Posterior cingulate gyrus (tissue), 11 donors: ENCODE measurements at regions of chr10 and their contacts with region 1.

Region 1: DNA sequence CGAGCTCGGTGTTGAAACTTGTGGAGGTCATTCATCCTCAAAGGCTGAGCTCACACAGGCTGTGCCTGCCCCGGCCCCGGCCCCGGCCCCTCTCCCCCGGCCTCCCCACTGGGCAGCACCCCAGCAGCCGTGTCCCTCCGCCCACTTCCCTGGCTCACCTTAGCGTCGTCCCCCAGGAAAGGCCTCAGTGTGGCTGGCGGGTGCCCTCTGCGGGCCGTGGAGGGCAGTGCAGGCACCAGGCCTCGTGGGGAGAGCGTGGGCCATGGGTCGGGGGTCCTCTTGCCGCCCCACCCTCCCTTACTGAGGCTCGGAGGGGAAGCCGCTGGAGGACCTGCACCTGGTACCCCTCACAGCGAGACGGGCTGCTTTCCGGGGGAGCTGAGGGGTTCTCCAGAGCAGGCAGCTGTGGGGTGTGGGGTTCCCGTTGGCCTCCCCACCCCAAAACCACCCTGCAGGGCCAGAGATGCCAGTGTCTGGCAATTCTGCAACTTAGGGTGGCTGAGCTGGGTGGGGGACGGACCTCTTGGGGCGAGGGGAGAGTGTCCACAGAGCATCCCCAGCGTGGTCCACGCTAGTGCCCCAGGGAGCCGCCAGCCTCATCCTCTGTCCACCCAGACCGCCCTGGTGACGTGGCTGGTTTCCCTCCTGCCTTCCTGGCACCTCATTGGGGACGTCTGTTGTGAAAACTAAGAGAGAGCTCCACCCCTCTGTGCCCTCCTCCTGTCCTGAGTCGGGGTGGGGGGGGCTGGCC is 44.2 kb upstream of the DPYSL4 start:
- DNase-seq: peak in 9 of 10 donors; percentile 48 to 95 (median 66)

Region 2: DNA sequence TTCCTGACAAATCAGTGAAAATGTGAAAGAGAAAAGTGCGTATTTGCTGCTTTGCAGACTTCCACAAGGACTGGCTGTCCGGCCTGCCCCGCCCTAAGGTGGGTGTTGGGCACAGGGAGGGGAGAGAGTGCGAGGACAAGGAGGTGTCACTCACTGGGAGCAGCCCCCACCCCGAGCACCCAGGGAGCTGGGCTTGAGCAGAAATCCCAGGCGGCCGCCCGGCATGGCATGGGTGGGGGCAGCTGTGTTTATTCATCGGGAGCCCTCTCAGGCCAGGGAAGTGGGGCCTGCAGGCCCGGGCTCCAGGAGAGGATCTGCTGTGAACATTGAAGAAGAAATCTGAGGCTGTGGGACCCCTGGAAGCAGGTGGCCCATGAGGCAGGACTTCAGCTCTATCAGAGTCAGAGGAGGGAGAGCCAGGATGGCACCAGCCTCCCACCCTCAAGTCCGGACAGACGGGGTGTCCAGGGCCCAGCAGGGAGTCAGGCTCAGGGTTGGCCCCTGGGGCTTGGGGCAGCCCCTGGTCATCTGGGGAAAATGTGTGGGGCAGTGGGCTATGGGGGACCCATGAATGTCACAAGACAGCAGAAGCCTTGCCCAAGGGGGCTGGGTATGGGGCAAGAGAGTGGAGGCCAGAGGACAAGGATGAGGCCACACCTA is 406.1 kb before region 1 on chr10:
- intact Hi-C with region 1: no loop called
- DNase-seq: peak in 2 of 10 donors; percentile 66 to 67

Region 3: DNA sequence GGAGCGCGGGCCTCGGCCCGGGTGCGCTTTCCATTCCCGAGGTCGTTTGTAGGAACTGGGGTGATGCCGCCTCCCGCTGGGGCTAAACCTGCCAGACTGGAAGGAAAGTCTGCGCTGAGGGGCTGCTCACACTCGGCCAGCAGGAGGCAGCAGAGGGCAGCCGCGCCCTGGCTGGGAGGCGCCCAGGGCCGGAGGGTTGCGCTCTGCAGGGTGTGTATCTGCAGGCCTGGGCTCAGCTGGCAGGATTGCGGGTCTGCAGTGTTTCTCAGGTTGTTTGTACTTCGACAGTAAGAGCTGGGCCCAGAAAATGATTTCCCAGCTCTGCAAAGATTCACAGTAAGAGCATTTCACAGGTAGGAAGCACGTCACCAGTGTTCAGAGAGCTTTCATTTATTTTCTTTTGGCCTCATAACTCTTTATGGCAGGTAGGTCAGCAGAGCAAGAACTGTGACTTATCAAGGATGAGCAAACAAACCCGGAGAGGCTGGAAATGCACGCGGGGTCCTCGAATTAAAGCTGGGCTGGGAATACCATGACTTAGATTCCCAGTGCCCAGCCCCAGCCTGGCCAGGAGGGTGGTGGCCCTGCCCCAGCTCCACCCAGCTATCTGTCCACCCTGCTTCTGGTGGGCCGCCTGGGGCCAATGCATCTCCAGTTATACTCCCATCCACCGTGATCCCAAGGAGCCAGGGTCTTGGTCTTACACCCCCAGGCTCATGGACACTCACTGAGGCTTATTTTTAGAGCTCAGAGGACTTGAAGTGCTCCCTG is 257.0 kb before region 1 on chr10:
- intact Hi-C with region 1: loop called (anchors 5 kb)
- DNase-seq: peak; percentile 41 to 96 (median 73)

Region 4: GRCh38 chr10:132107186-132107948 is 35.2 kb before region 1 on chr10:
- intact Hi-C with region 1: loop called (anchors 5 kb)
- DNase-seq: peak in 6 of 10 donors; percentile 11 to 89 (median 59)

Region 5: GRCh38 chr10:132264966-132265901 is 122.6 kb after region 1 on chr10:
- intact Hi-C with region 1: no loop called
- DNase-seq: peak in 4 of 10 donors; percentile 37 to 84 (median 75)